WTC11 (cell line): ENCODE measurements at regions of chr2 and their contacts with region 1.

Region 1: GRCh38 chr2:160054984-160055725 is 7.3 kb downstream of the PLA2R1 start:
- DNase-seq: peak; percentile 44
- ATAC-seq: peak; percentile 77
- H3K4me3 Mint-ChIP-seq: no peak overlapping the region
- H3K27ac Mint-ChIP-seq: no peak overlapping the region
- H3K4me1 Mint-ChIP-seq: peaks cover 47% of the 10 kb centered on the region
- H3K27me3 Mint-ChIP-seq: peaks cover 15% of the 10 kb centered on the region
- CTCF ChIP-seq: no peak

Region 2: DNA sequence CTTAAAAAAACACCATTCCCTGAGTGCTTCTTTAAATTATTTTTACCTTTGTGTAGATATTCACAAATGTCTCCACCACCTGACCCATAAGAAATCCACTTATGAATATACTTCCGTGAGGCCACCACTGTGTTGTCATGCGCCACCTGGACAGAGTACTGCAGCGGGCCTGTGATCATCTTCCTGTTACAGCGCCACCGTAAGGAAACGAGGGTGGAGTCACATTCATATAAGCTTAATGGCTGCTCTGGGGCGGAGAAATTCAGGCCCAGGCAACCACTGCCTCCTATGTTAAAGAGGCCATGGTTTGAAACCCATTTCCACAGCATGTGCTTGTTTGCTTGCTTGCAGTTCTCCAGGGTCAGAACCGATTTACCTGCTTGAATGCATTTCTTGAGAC is 10.4 kb before region 1 on chr2:
- CTCF ChIA-PET with region 1: interaction called, 12 read pairs
- POLR2A ChIA-PET with region 1: no interaction called
- DNase-seq: peak; percentile 30
- ATAC-seq: peak; percentile 86
- H3K4me3 Mint-ChIP-seq: no peak overlapping the region
- H3K27ac Mint-ChIP-seq: no peak overlapping the region
- H3K4me1 Mint-ChIP-seq: peaks cover 20% of the 10 kb centered on the region
- H3K27me3 Mint-ChIP-seq: no peaks in the 10 kb centered on the region
- CTCF ChIP-seq: no peak

Region 3: DNA sequence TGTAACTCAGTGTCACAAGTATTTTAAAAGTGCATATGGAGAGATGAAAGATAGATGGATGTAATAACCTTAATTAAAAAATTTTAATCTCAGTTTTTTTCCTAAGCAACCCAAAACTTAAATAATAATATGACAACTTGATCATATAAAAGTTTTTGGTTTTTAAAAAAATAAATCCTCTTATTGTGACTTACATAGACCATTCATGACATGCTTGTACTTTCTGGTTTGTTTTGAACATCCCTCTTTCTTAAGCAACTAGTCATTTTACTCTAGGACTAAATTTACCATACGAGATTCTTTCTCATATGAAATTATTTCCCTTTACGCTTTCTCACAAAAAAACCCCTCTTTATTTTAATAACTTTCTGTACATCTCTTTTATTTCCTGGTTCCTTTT is 13.8 kb after region 1 on chr2:
- CTCF ChIA-PET with region 1: no interaction called
- POLR2A ChIA-PET with region 1: no interaction called
- DNase-seq: no peak
- ATAC-seq: no peak
- H3K4me3 Mint-ChIP-seq: no peak overlapping the region
- H3K27ac Mint-ChIP-seq: no peak overlapping the region
- H3K4me1 Mint-ChIP-seq: no peaks in the 10 kb centered on the region
- H3K27me3 Mint-ChIP-seq: no peaks in the 10 kb centered on the region; the same call in 1 of the 2 replicates
- CTCF ChIP-seq: no peak

Region 4: DNA sequence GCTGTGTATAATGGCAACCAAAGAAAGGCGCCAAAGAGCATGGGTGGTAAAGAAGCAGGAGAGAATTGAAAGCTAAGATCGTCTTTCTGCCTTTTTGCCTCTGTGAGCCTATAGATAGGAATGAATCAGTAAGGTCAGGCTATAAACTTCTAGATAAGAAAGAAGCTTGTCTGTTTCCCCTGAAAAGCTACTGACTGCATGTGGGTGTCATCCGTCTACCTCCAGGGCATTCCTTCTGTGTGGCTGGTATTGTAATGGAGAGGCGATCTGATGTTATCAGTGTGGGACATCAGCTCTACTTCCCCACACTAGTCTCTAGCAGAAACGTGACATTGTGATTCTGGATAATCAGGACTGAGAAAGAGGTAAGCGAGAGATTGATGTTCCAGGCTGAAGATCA is 70.7 kb after region 1 on chr2:
- CTCF ChIA-PET with region 1: no interaction called
- POLR2A ChIA-PET with region 1: no interaction called
- DNase-seq: no peak
- ATAC-seq: peak; percentile 85
- H3K4me3 Mint-ChIP-seq: no peak overlapping the region
- H3K27ac Mint-ChIP-seq: no peak overlapping the region
- H3K4me1 Mint-ChIP-seq: peaks cover 15% of the 10 kb centered on the region
- H3K27me3 Mint-ChIP-seq: no peaks in the 10 kb centered on the region
- CTCF ChIP-seq: no peak